Activated CD4-positive, alpha-beta memory T cell treated with anti-CD3 and anti-CD28 coated beads for 36 hours (primary cell): ENCODE measurements at regions of chr16 and their contacts with region 1.

Region 1: GRCh38 chr16:1964506-1965395 is at the start of gene RPS2:
- DNase-seq: peak; percentile 99
- H3K4me3 Mint-ChIP-seq: peak within 1 kb of the TSS; percentile 92
- H3K27ac Mint-ChIP-seq: peak within 1 kb of the TSS; percentile 96
- H3K4me1 Mint-ChIP-seq: peaks cover 41% of the 10 kb centered on the region
- H3K27me3 Mint-ChIP-seq: no peaks in the 10 kb centered on the region
- total RNA-seq, gene RPS2: 5,123 to 5,136 TPM

Region 2: GRCh38 chr16:1492923-1493745 is 471.6 kb before region 1 on chr16 and contains the start of gene TELO2:
- CTCF ChIA-PET with region 1: no interaction called
- POLR2A ChIA-PET with region 1: no interaction called
- intact Hi-C with region 1: no loop called
- DNase-seq: peak; percentile 90
- H3K4me3 Mint-ChIP-seq: peak within 1 kb of the TSS; percentile 87
- H3K27ac Mint-ChIP-seq: peak within 1 kb of the TSS; percentile 93
- H3K4me1 Mint-ChIP-seq: peaks cover 15% of the 10 kb centered on the region
- H3K27me3 Mint-ChIP-seq: no peaks in the 10 kb centered on the region
- total RNA-seq, gene TELO2: 62.6 to 63.2 TPM

Region 3: DNA sequence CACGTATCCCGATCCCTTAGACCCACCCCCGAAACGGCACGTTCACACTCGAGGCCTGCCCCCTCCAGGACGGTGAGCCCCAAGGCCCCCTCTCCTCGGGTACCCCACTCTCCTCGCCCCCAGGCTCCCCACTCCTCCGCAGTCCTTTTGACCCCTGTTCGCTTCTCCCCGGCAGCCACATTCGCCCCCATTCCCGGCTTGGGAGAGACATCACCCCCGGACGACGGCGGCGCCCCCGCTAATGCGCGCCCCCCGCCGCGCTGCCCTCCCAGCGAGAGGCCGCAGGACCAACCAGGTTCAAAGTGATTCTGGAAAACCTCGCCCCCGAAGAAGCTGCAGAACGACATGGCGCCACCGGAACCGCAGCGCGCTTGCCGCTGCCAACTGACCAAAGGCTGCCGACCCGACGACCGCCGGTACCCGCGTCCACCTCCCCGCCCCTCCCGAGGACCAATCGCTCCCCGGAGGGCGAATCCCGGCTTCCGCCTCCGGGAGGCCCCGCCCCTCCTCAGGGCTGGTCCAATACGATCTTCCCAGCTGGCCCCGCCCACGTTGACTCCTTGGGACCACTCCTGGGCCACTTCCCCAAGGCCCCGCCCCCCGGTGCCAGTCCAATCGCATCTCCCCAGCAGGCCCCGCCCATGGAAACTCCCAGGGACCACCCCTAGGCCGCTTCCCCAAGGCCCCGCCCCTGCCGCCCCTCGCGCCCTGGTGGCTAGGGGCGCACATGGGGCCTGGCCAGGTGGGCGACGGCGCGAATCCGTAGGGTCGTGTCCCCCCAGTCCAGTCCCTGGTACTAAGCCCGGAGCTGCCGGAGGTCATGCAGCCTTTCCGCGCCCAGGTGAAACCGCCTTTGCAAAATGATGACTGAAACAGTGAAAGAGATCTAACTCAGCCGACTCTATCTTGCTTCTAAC is 21.7 kb before region 1 on chr16 and contains the start of gene MSRB1:
- CTCF ChIA-PET with region 1: interaction called, 6 read pairs
- POLR2A ChIA-PET with region 1: interaction called, 17 read pairs
- intact Hi-C with region 1: loop called (anchors 1 kb)
- DNase-seq: peak; percentile 100
- H3K4me3 Mint-ChIP-seq: peak within 1 kb of the TSS; percentile 88
- H3K27ac Mint-ChIP-seq: peak within 1 kb of the TSS; percentile 73
- H3K4me1 Mint-ChIP-seq: peaks cover 25% of the 10 kb centered on the region
- H3K27me3 Mint-ChIP-seq: no peaks in the 10 kb centered on the region
- total RNA-seq, gene MSRB1: 20.7 to 23.6 TPM

Region 4: DNA sequence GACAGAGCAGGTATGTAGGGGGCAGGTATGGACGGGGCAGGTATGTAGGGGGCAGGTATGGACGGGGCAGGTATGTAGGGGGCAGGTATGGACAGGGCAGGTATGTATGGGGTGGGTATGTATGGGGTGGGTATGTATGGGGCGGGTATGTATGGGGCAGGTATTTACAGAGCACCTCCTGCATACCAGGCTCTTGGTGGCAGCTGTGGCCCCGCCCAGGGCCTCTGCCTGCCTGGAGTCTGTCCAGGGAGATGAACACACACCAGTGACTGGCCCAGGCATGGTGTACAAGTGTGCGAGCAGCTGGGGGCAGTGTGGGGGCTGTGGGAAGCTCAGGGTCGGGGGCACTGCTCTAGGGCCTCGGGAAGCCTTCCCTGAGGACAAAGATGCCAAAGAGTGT is 14.7 kb before region 1 on chr16:
- CTCF ChIA-PET with region 1: no interaction called
- POLR2A ChIA-PET with region 1: interaction called, 12 read pairs
- intact Hi-C with region 1: no loop called
- DNase-seq: no peak
- H3K4me3 Mint-ChIP-seq: no peak overlapping the region
- H3K27ac Mint-ChIP-seq: no peak overlapping the region
- H3K4me1 Mint-ChIP-seq: peaks cover 3% of the 10 kb centered on the region
- H3K27me3 Mint-ChIP-seq: no peaks in the 10 kb centered on the region

Region 5: GRCh38 chr16:1983544-1984346 is 19.0 kb after region 1 on chr16 and contains the start of gene GFER:
- CTCF ChIA-PET with region 1: interaction called, 3 read pairs
- POLR2A ChIA-PET with region 1: interaction called, 22 read pairs
- intact Hi-C with region 1: no loop called
- DNase-seq: peak; percentile 88
- H3K4me3 Mint-ChIP-seq: peak within 1 kb of the TSS; percentile 81
- H3K27ac Mint-ChIP-seq: peak within 1 kb of the TSS; percentile 58
- H3K4me1 Mint-ChIP-seq: peaks cover 15% of the 10 kb centered on the region
- H3K27me3 Mint-ChIP-seq: peaks cover 28% of the 10 kb centered on the region
- total RNA-seq, gene GFER: 34.4 to 37.5 TPM

Region 6: GRCh38 chr16:1991948-1992703 is 27.4 kb after region 1 on chr16:
- CTCF ChIA-PET with region 1: interaction called, 3 read pairs
- POLR2A ChIA-PET with region 1: interaction called, 25 read pairs
- intact Hi-C with region 1: loop called (anchors 1 kb)
- DNase-seq: peak; percentile 99
- H3K4me3 Mint-ChIP-seq: peak overlapping the region; percentile 71
- H3K27ac Mint-ChIP-seq: no peak overlapping the region
- H3K4me1 Mint-ChIP-seq: peaks cover 25% of the 10 kb centered on the region
- H3K27me3 Mint-ChIP-seq: peaks cover 12% of the 10 kb centered on the region

Region 7: GRCh38 chr16:2009789-2010510 is 45.2 kb after region 1 on chr16 and contains the start of gene ZNF598:
- CTCF ChIA-PET with region 1: no interaction called
- POLR2A ChIA-PET with region 1: interaction called, 5 read pairs
- intact Hi-C with region 1: loop called (anchors 5 kb)
- DNase-seq: peak; percentile 82
- H3K4me3 Mint-ChIP-seq: peak within 1 kb of the TSS; percentile 84
- H3K27ac Mint-ChIP-seq: peak within 1 kb of the TSS; percentile 83
- H3K4me1 Mint-ChIP-seq: peaks cover 35% of the 10 kb centered on the region
- H3K27me3 Mint-ChIP-seq: no peaks in the 10 kb centered on the region
- total RNA-seq, gene ZNF598: 67.2 to 67.6 TPM

Region 8: GRCh38 chr16:2033057-2033908 is 68.5 kb after region 1 on chr16:
- CTCF ChIA-PET with region 1: no interaction called
- POLR2A ChIA-PET with region 1: no interaction called
- intact Hi-C with region 1: no loop called
- DNase-seq: no peak
- H3K4me3 Mint-ChIP-seq: no peak overlapping the region
- H3K27ac Mint-ChIP-seq: no peak overlapping the region
- H3K4me1 Mint-ChIP-seq: no peaks in the 10 kb centered on the region
- H3K27me3 Mint-ChIP-seq: no peaks in the 10 kb centered on the region

Region 9: DNA sequence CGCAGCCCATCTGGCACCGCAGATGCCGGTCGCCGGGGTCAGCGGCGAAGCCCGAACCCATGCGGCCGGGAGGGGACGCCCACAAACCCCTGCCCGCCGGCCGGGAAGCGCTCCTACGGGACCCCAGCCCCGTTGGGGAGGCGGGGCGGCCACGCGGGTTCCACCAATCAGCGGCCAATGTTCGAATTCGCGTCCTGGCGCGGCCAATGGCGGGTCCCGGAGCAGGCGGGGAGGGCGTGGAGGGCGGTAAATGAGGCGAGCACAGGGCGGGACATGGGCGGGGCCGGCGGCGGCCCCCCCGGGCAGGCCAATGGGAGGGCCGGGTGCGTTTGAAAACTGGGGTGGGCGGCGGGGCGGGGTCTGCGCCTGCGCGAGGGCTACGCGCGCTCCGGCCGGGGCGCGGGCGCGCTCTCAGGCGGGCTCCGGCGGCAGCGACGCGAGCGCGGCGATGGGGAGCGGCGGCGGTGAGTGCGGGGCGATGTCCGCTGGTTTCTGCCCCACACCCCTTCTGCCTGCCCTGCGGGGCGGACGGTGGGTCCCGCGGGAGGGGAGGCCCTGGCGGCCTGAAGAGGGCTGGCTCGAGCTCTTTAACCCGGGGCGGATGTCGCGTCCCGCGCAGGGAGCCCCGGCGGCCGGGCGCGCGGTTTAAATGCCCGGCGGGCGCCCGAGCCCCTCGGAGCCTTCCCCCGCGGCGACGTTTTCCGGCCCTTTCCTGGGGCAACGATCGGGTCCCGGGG is 464.5 kb after region 1 on chr16 and contains the start of gene CCNF:
- CTCF ChIA-PET with region 1: no interaction called
- POLR2A ChIA-PET with region 1: no interaction called
- intact Hi-C with region 1: loop called (anchors 2 kb)
- DNase-seq: peak; percentile 99
- H3K4me3 Mint-ChIP-seq: peak within 1 kb of the TSS; percentile 92
- H3K27ac Mint-ChIP-seq: peak within 1 kb of the TSS; percentile 69
- H3K4me1 Mint-ChIP-seq: peaks cover 18% of the 10 kb centered on the region
- H3K27me3 Mint-ChIP-seq: no peaks in the 10 kb centered on the region
- total RNA-seq, gene CCNF: 53.5 to 54.7 TPM